Natural killer cell (primary cell): ENCODE measurements at regions of chr6 and their contacts with region 1.

Region 1: DNA sequence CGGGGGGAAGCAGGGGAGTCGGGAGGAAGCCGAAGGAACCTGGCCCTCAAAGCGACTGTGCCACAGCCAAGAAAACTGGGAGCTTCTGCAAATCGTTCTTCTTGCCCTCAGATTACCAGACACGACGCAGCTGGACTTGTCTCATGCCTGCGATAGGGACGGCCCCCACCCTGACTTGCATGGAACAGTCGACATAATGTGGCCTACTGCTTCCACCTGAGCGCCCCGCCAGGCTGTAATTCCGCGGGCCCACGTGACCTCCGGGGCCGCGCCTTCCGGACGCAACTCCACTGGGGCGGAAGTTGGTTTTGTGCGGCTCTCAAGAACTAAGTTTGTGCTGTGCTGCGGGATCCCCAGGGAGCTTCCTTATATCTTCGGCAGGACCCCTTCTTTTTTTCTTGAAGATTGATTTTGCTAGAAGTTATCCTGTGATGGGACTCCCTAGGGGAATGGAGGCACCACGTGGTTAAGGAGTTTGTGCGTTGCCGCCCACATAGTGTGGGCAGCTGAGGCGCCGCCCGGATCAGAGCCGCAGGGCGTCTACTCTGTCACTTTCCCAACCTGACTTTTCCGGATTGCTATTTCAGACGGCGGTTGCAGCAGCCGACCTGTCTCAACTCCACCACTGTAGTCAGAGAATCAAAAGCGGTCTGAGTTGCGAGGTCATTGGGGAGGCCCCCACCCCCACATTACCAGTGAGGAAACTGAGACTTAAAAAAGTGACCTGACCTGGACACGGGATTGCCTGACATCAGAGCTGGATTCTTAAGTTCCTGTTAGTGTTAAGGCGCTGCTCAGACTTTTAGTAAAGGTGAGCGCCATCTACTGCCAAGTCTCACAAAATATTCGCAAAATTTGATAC is 540 bp upstream of the CD164 start:
- DNase-seq: peak; percentile 93 to 97
- ATAC-seq: peak; percentile 65 to 82 (median 72)
- H3K4me3 ChIP-seq: peak overlapping the region; percentile 95
- H3K4me3 Mint-ChIP-seq: peak overlapping the region; percentile 96
- H3K27ac ChIP-seq: peak overlapping the region; percentile 93
- H3K27ac Mint-ChIP-seq: peak overlapping the region; percentile 88 to 98
- H3K4me1 ChIP-seq: peaks cover 15% of the 10 kb centered on the region
- H3K4me1 Mint-ChIP-seq: peaks cover 55 to 64% of the 10 kb centered on the region in 2 donors
- H3K27me3 ChIP-seq: no peaks in the 10 kb centered on the region
- H3K27me3 Mint-ChIP-seq: no peaks in the 10 kb centered on the region
- CTCF ChIP-seq: peak; percentile 79

Region 2: DNA sequence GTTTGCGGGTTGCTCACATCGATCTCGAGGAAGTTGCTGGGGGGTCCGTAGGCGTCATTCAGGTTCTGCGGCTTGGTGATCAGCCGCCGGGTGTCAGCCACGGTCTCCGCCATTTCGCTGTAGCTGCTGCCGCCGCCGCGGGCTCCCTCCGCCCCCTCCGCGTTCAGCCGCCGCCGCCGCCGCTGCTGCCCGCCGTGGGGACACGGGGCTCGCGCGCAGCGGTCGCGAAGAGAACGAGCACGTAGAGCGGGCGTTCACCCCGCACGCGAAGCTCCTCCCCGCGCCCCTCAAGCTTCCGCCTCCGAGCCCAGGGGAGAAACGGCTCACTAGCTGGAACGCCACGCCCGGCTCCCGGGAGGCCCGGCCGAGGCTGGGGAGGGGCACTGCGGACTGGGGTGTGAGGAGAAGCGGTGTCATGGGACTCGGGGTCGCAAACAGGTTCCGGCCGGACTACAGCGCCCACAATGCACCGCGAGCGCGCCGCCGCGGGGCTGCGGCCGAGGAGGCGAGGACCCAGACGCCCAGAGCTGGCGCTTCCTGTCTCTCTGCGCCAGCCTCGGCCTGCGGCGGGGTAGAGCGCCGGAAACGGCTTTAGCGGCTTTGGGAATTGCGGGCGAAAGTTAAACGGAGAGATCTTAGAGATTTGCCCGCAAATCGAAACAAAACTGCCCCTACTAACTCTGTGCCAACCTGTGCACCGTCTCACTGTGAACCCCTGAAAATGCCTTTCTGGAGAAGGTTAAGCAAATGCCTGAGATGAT is 1121.8 kb before region 1 on chr6 and contains the start of gene SNX3:
- intact Hi-C with region 1: loop called (anchors 5 kb)
- DNase-seq: peak; percentile 91 to 93
- ATAC-seq: peak; percentile 83 to 95 (median 86)
- H3K4me3 ChIP-seq: peak within 1 kb of the TSS; percentile 89
- H3K4me3 Mint-ChIP-seq: peak within 1 kb of the TSS; percentile 93
- H3K27ac ChIP-seq: peak within 1 kb of the TSS; percentile 98
- H3K27ac Mint-ChIP-seq: peak within 1 kb of the TSS; percentile 95 to 96
- H3K4me1 ChIP-seq: peaks cover 23% of the 10 kb centered on the region
- H3K4me1 Mint-ChIP-seq: peaks cover 16 to 34% of the 10 kb centered on the region in 2 donors
- H3K27me3 ChIP-seq: no peaks in the 10 kb centered on the region
- H3K27me3 Mint-ChIP-seq: no peaks in the 10 kb centered on the region
- CTCF ChIP-seq: no peak
- total RNA-seq, gene SNX3: 59.7 to 71.6 (median 70.6) TPM

Region 3: GRCh38 chr6:109009236-109009961 is 373.4 kb before region 1 on chr6:
- intact Hi-C with region 1: loop called (anchors 2 kb)
- DNase-seq: peak; percentile 93 to 97
- ATAC-seq: peak; percentile 92 to 98 (median 95)
- H3K4me3 ChIP-seq: peak overlapping the region; percentile 99
- H3K4me3 Mint-ChIP-seq: peak overlapping the region; percentile 97
- H3K27ac ChIP-seq: peak overlapping the region; percentile 95
- H3K27ac Mint-ChIP-seq: peak overlapping the region; percentile 90 to 99
- H3K4me1 ChIP-seq: peaks cover 12% of the 10 kb centered on the region
- H3K4me1 Mint-ChIP-seq: peaks cover 47 to 57% of the 10 kb centered on the region in 2 donors
- H3K27me3 ChIP-seq: no peaks in the 10 kb centered on the region
- H3K27me3 Mint-ChIP-seq: no peaks in the 10 kb centered on the region
- CTCF ChIP-seq: no peak

Region 4: GRCh38 chr6:109236115-109237076 is 146.4 kb before region 1 on chr6:
- intact Hi-C with region 1: loop called (anchors 5 kb)
- DNase-seq: peak; percentile 32 to 54
- ATAC-seq: peak; percentile 62 to 73 (median 66)
- H3K4me3 ChIP-seq: no peak overlapping the region
- H3K4me3 Mint-ChIP-seq: peak overlapping the region; percentile 72
- H3K27ac ChIP-seq: peak overlapping the region; percentile 76
- H3K27ac Mint-ChIP-seq: peak overlapping the region; percentile 81 to 88
- H3K4me1 ChIP-seq: peaks cover 30% of the 10 kb centered on the region
- H3K4me1 Mint-ChIP-seq: peaks cover 36 to 38% of the 10 kb centered on the region in 2 donors
- H3K27me3 ChIP-seq: no peaks in the 10 kb centered on the region
- H3K27me3 Mint-ChIP-seq: no peaks in the 10 kb centered on the region
- CTCF ChIP-seq: peak; percentile 34

Region 5: DNA sequence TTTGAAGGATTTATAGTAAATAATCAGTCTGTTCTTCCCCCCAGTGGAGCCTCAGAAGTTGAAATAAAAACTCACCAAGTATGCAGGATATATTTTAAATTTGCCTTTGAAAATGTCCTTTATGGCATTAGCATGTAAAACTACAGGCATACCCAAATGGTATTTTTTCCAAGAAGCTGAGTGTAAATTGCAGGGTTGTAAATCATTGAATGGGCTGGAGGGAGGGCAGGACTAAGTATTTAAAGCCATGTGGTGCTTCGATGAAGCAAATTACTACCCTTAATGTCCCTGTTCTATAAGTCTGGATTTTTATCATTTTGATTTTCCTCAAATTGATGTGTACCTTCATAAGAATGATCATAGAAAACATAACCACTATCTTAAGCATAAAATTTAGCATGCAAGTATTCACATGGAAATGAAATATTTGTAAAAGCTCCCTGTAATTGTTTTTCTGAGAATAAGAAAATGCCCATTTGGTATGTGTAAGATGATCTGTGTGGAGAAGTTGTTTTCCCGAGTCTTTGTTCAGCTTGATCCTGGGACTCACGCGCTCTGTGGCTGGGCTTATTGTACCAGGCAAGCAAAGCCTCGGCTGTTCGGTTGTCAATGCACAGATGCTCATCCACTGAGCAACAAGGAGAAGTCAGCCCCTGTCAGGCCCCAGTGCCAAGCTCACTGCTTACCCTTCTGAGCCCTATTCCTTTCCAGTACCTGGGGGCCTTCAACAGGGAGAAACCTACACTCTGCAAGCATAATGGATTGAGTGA is 67.3 kb before region 1 on chr6:
- intact Hi-C with region 1: no loop called
- DNase-seq: no peak
- ATAC-seq: no peak
- H3K4me3 ChIP-seq: no peak overlapping the region
- H3K4me3 Mint-ChIP-seq: no peak overlapping the region
- H3K27ac ChIP-seq: no peak overlapping the region
- H3K27ac Mint-ChIP-seq: no peak overlapping the region
- H3K4me1 ChIP-seq: no peaks in the 10 kb centered on the region
- H3K4me1 Mint-ChIP-seq: no peaks in the 10 kb centered on the region
- H3K27me3 ChIP-seq: no peaks in the 10 kb centered on the region
- H3K27me3 Mint-ChIP-seq: no peaks in the 10 kb centered on the region
- CTCF ChIP-seq: no peak

Region 6: DNA sequence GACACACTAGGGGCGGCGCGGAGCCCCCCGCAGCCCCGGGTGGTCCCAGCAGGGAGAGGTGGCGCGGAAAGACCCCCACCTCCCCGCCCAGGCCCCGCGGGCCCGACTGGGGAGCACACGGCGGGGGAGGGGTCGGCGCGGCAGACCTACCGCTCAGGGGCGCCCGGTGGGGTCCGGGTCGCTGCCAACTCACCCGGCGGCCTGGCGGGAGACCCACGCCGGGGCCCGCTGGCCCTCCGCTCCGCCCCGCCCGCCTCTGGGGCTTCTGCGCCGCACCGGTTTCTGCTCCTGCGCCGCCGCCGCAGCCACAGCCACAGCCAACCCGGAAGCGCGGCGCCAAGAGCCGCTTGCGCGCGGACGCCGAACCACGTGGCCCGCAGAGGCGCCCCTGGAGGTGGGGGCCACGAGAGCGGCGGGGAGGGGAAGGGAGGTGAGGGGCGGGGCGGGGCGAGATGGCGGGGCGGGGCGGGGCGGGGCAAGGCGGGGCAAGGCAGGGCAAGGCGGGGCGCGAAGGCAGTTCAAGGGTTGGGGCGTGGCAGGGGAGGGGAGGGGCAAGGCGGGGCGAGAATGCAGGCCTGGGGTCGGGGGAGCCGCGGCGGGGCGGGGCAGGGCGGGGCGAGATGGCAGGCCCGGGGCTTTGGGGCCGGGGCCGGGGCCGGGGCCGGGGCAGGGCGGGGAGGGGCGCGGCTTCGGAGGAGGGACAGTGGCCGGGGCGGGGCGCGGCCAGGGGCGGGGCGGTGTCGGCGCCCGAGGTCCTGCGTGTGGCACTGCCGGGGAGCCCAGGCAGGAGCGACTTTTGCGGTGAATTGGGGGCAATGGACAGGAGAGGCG is 100.3 kb after region 1 on chr6 and contains the start of gene ZBTB24:
- intact Hi-C with region 1: loop called (anchors 1 kb)
- DNase-seq: peak; percentile 86 to 95
- ATAC-seq: peak; percentile 86 to 95 (median 91)
- H3K4me3 ChIP-seq: peak within 1 kb of the TSS; percentile 80
- H3K4me3 Mint-ChIP-seq: peak within 1 kb of the TSS; percentile 92
- H3K27ac ChIP-seq: peak within 1 kb of the TSS; percentile 64
- H3K27ac Mint-ChIP-seq: peak within 1 kb of the TSS; percentile 67 to 85
- H3K4me1 ChIP-seq: peaks cover 32% of the 10 kb centered on the region
- H3K4me1 Mint-ChIP-seq: peaks cover 42 to 53% of the 10 kb centered on the region in 2 donors
- H3K27me3 ChIP-seq: no peaks in the 10 kb centered on the region
- H3K27me3 Mint-ChIP-seq: no peaks in the 10 kb centered on the region
- CTCF ChIP-seq: no peak
- total RNA-seq, gene ZBTB24: 6.7 to 10.6 (median 8.6) TPM

Region 7: GRCh38 chr6:109934293-109934692 is 551.5 kb after region 1 on chr6:
- intact Hi-C with region 1: no loop called
- DNase-seq: no peak
- ATAC-seq: peak in 1 of 3 donors; percentile 30
- H3K4me3 ChIP-seq: no peak overlapping the region
- H3K4me3 Mint-ChIP-seq: no peak overlapping the region
- H3K27ac ChIP-seq: no peak overlapping the region
- H3K27ac Mint-ChIP-seq: no peak overlapping the region
- H3K4me1 ChIP-seq: no peaks in the 10 kb centered on the region
- H3K4me1 Mint-ChIP-seq: no peaks in the 10 kb centered on the region
- H3K27me3 ChIP-seq: no peaks in the 10 kb centered on the region
- H3K27me3 Mint-ChIP-seq: no peaks in the 10 kb centered on the region
- CTCF ChIP-seq: no peak